Astrocyte of the cerebellum (primary cell): ENCODE measurements at regions of chrX and their contacts with region 1.

Region 1: GRCh38 chrX:19204636-19205035 is 82.4 kb upstream of the ADGRG2 start:
- DNase-seq: no peak
- H3K4me3 ChIP-seq: no peak overlapping the region
- CTCF ChIP-seq: no peak

Region 2: DNA sequence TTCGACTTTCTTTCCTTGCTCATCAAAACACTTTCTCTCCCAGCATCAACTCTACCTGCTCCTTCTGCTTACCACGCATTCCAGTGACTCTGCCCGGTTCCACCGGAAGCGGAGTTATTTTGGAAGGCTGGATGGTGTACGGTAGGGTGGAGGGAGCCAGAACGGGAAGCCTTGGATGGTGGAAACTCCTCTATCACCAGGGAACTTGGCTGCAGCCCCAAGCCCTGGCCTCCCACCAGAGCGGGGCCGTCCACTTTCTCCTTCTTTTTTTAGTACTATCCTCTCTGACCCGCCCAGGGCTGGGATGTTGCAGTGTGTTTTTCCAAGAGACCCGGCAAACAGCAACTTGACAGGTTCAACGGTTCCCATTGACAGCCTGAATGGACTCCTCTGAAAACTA is 110.0 kb before region 1 on chrX:
- in situ Hi-C with region 1: no loop called
- DNase-seq: no peak
- H3K4me3 ChIP-seq: no peak overlapping the region
- CTCF ChIP-seq: no peak

Region 3: GRCh38 chrX:19245711-19246269 is 41.2 kb after region 1 on chrX:
- in situ Hi-C with region 1: loop called (anchors 5 kb)
- DNase-seq: no peak
- H3K4me3 ChIP-seq: no peak overlapping the region
- CTCF ChIP-seq: no peak

Region 4: DNA sequence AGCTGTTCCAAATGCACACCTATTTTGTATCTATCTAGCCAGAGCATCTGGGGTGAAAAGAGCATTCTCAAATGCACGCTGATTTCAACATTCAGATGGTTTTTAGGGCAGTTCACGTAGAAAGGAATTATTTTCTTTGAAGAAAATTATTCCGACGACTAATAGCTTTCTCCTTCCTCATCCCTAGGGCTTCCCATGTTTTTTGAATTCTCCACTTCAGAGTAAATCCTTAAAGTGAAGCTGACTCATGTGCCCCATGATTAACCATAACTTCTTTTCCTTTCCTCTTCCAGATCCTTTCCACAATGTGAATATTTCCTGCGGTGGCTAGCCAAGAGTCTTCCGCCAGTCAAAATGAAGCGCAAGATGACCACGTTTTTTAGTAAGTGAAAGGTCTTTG is 52.4 kb after region 1 on chrX:
- in situ Hi-C with region 1: no loop called
- DNase-seq: no peak
- H3K4me3 ChIP-seq: no peak overlapping the region
- CTCF ChIP-seq: no peak